ENCODE measurements at regions of chr21 and their contacts with region 1.

Region 1: GRCh38 chr21:31866077-31866511 is 6.7 kb upstream of the HUNK start:
- DNase-seq: peak; percentile 81 to 98 (median 92)

Region 2: GRCh38 chr21:31786164-31786920 is 79.8 kb before region 1 on chr21:
- intact Hi-C with region 1: loop called (anchors 5 kb)
- DNase-seq: no peak

Region 3: GRCh38 chr21:31921079-31921478 is 55.0 kb after region 1 on chr21:
- intact Hi-C with region 1: no loop called
- DNase-seq: no peak

Region 4: DNA sequence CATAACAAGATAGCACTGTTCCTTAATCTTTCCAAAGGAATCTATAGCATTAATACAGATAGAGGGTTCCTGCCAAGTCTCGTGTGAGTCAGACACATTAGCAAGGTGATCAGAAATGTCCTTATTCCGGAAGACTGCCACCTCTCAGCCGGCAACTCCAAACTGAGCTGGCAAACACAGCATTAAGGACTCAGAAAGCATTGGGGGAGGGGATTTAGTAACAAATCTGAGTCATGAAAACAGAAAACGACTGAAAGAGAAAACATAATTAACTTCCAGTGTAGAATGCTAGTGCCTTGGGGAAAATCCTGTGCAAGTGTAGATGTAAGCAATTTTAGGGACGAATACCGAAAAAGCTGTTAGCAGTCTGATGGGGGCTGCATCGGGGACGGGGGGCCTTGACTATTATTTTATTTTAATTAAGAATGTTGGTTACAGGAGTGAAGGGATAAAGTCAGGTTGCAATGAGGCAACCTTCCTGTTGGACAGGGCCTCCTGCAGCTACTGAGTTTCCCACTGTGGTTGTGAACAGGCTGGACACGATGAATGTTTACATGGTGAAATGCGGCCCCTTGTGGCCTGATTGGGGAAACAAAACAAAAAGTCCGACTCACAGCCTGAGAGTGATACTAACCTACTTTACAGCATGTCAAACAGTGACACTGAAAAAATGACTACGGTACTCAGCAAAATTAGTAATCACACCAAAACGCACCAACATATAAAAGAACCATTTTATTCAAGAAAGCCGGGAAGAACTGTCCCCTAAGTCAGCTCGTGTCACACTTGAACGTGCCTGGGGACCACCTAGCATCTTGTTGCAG is 392.1 kb after region 1 on chr21:
- intact Hi-C with region 1: loop called (anchors 1 kb)
- DNase-seq: peak; percentile 53 to 96 (median 76)

Measured in posterior cingulate gyrus (tissue), 11 donors.